Activated CD4-positive, alpha-beta memory T cell treated with anti-CD3 and anti-CD28 coated beads for 36 hours (primary cell): ENCODE measurements at regions of chr10 and their contacts with region 1.

Region 1: GRCh38 chr10:124802313-124802675 is 675 bp downstream of the ABRAXAS2 start:
- DNase-seq: peak; percentile 39
- H3K4me3 Mint-ChIP-seq: peak overlapping the region; percentile 93
- H3K27ac Mint-ChIP-seq: peak overlapping the region; percentile 73
- H3K4me1 Mint-ChIP-seq: peaks cover 21% of the 10 kb centered on the region
- H3K27me3 Mint-ChIP-seq: peaks cover 2% of the 10 kb centered on the region

Region 2: DNA sequence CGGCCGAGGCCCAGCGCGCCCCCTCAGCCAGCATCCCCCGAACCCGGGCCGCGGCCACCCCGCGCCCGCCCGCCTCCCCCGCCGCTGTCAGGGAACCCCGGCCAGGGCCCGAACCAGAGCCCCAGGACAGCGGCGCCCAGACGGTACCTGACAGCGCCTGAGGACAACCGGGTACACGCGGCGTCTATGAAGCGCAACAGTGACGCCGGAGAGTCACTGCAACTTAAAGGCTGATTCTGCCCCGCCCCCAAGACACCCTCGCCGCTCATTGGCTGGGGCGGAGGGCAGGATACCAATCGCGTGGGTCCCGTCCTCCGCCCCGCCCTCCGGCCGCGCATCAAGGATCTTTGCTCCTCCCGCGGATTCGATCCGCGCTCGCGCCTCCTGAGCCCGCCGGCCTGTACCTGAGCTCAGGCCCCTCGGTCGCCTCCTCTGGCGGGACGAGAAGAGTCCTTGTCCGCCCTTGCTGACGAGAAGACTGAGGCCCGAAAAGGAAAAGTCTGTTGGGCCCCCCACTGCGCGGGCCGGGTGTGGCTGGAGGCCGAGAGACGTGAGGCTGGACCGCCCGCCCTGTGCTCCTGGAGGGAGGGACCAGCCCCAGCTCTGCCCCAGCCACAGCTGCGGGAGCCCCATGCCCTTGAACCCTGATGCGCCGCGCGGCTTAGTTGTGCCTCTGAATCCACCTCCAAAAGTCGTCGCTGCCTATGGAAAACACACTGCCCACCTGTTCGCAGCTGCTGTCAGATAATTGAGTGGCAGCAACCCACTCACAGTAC is 383.4 kb before region 1 on chr10 and contains the start of gene OAT:
- CTCF ChIA-PET with region 1: no interaction called
- POLR2A ChIA-PET with region 1: no interaction called
- intact Hi-C with region 1: loop called (anchors 5 kb)
- DNase-seq: peak; percentile 97
- H3K4me3 Mint-ChIP-seq: peak within 1 kb of the TSS; percentile 79
- H3K27ac Mint-ChIP-seq: no peak within 1 kb of the TSS
- H3K4me1 Mint-ChIP-seq: peaks cover 16% of the 10 kb centered on the region
- H3K27me3 Mint-ChIP-seq: peaks cover 7% of the 10 kb centered on the region
- total RNA-seq, gene OAT: 34.6 to 38.1 TPM

Region 3: GRCh38 chr10:124579011-124579399 is 223.3 kb before region 1 on chr10:
- CTCF ChIA-PET with region 1: no interaction called
- POLR2A ChIA-PET with region 1: no interaction called
- intact Hi-C with region 1: no loop called
- DNase-seq: no peak
- H3K4me3 Mint-ChIP-seq: no peak overlapping the region
- H3K27ac Mint-ChIP-seq: no peak overlapping the region
- H3K4me1 Mint-ChIP-seq: no peaks in the 10 kb centered on the region
- H3K27me3 Mint-ChIP-seq: no peaks in the 10 kb centered on the region

Region 4: DNA sequence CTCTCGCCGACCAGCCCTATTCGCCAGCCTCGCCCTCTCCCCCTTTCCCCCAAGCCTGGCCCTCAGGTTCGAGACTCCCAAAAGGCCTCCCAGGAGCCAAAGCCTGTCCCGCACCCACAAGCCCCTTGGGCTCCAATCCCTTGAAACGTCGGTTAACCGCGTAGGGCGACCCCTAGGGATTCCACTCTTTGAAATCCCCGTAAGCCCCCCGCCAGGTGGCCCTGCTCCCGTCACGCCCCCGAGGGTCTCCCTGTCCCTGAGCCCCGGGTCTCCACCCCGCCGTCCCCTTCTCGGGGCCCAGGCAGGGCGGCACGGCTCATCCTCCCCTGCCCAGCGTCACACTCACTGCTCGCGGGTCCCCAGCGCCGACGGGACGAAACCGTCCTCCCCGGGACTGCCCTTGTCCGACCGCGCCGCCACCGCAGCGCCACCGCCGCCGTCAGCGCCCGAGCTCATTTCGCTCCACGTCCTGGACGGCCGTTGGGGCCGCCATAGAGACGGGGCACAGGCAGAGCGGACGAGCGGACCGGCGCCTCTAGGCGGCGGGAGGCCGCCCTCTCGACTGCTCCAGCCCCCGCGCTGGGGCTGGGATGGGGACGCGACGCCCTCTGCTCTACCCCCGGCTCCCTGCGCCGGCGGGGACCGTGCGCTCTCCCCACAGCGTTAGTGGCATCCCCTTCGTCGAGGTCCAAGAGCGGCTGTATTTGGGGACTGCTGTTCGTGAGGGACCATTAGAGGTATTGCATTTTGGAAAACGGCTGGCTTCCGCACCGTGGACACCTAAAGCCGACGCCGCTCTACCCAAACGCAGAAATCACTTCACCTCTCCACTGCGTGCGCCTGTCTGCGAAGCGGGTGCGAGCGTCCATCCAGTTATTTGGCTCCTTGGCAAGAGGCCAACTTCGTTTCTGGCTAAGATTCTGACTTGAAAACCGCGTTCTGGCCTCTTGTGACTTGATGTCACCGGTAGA is 10.6 kb before region 1 on chr10 and contains the start of gene EEF1AKMT2:
- CTCF ChIA-PET with region 1: interaction called, 5 read pairs
- POLR2A ChIA-PET with region 1: interaction called, 11 read pairs
- intact Hi-C with region 1: loop called (anchors 1 kb)
- DNase-seq: peak; percentile 89
- H3K4me3 Mint-ChIP-seq: peak within 1 kb of the TSS; percentile 96
- H3K27ac Mint-ChIP-seq: peak within 1 kb of the TSS; percentile 94
- H3K4me1 Mint-ChIP-seq: peaks cover 19% of the 10 kb centered on the region
- H3K27me3 Mint-ChIP-seq: no peaks in the 10 kb centered on the region
- total RNA-seq, gene EEF1AKMT2: 28.2 to 33.1 TPM

Region 5: GRCh38 chr10:124916585-124917427 is 114.5 kb after region 1 on chr10:
- CTCF ChIA-PET with region 1: interaction called, 3 read pairs
- POLR2A ChIA-PET with region 1: no interaction called
- intact Hi-C with region 1: loop called (anchors 1 kb)
- DNase-seq: peak; percentile 97
- H3K4me3 Mint-ChIP-seq: peak overlapping the region; percentile 87
- H3K27ac Mint-ChIP-seq: peak overlapping the region; percentile 81
- H3K4me1 Mint-ChIP-seq: peaks cover 30% of the 10 kb centered on the region
- H3K27me3 Mint-ChIP-seq: no peaks in the 10 kb centered on the region